K562 (cell line): ENCODE measurements at regions of chr15 and their contacts with region 1.

Region 1: GRCh38 chr15:89177633-89178306 is 43.6 kb downstream of the RLBP1 start:
- DNase-seq: peak; percentile 52 to 75 (median 57)
- ATAC-seq: peak; percentile 89
- H3K4me3 ChIP-seq: no peak overlapping the region
- H3K27ac ChIP-seq: no peak overlapping the region
- H3K4me1 ChIP-seq: no peaks in the 10 kb centered on the region
- H3K27me3 ChIP-seq: no peaks in the 10 kb centered on the region
- CTCF ChIP-seq: peak; percentile 80 to 83 (median 81)
- EP300 ChIP-seq: no peak
- POLR2A ChIP-seq: no peak
- RAD21 ChIP-seq: peak; percentile 74 to 83

Region 2: GRCh38 chr15:88882785-88883184 is 295.0 kb before region 1 on chr15:
- CTCF ChIA-PET with region 1: interaction called, 4 read pairs
- POLR2A ChIA-PET with region 1: no interaction called
- in situ Hi-C with region 1: loop called (anchors 10 kb)
- intact Hi-C with region 1: no loop called
- DNase-seq: no peak
- ATAC-seq: no peak
- H3K4me3 ChIP-seq: no peak overlapping the region
- H3K27ac ChIP-seq: no peak overlapping the region
- H3K4me1 ChIP-seq: peaks cover 0 to 17% of the 10 kb centered on the region in 2 experiments; a peak in 1 of 5 replicates
- H3K27me3 ChIP-seq: peaks cover 0 to 13% of the 10 kb centered on the region in 2 experiments; a peak in 2 of 5 replicates
- CTCF ChIP-seq: no peak
- EP300 ChIP-seq: no peak
- POLR2A ChIP-seq: no peak
- RAD21 ChIP-seq: no peak

Region 3: DNA sequence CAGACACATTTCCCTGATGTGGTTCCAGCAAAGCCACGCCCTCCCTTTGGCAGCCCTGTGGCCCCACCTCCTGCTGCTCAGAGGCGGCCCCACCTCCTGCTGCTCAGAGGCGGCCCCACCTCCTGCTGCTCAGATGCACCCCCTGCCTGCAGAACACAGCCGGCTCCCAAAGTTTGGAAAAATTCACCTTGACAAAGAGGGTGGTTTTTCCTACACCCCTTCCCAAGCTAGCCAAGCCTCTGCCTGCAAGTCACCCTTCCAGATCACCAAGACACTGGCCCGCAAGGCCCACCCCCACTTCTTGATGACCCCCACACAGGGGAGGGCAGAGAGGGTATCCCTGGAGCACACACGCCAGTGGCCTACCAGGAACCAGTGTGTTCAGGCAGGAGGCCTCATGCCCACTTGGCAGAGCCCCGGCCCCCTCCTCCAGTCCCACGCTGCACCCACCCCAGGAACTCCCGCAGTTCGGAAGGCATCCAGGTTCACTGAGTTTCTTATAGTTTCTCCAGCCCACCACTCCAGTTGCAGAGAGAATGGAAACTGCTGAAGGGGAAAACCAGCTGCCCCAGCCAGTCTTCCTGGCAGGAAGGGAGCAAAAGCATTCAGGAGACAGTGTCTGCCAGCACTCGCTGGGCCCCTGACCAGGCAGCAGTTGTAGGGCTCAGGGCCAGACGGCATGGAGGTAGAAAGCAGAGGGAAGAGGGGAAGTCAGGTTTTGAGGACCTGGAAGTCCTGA is 280.1 kb before region 1 on chr15:
- CTCF ChIA-PET with region 1: interaction called, 11 read pairs
- POLR2A ChIA-PET with region 1: no interaction called
- in situ Hi-C with region 1: no loop called
- intact Hi-C with region 1: loop called (anchors 5 kb)
- DNase-seq: peak; percentile 83 to 91 (median 84)
- ATAC-seq: peak; percentile 98
- H3K4me3 ChIP-seq: no peak overlapping the region
- H3K27ac ChIP-seq: no peak overlapping the region
- H3K4me1 ChIP-seq: peaks cover 9 to 43% of the 10 kb centered on the region in 2 experiments; a peak in 4 of 5 replicates
- H3K27me3 ChIP-seq: no peaks in the 10 kb centered on the region
- CTCF ChIP-seq: peak; percentile 67 to 74 (median 73)
- EP300 ChIP-seq: no peak
- POLR2A ChIP-seq: no peak
- RAD21 ChIP-seq: peak; percentile 38 to 52; a peak in 3 of 4 replicates

Region 4: GRCh38 chr15:89034288-89034687 is 143.5 kb before region 1 on chr15:
- CTCF ChIA-PET with region 1: interaction called, 3 read pairs
- POLR2A ChIA-PET with region 1: no interaction called
- in situ Hi-C with region 1: no loop called
- intact Hi-C with region 1: loop called (anchors 5 kb)
- DNase-seq: peak in 1 of 4 experiments; percentile 47
- ATAC-seq: peak; percentile 77
- H3K4me3 ChIP-seq: no peak overlapping the region
- H3K27ac ChIP-seq: no peak overlapping the region
- H3K4me1 ChIP-seq: peaks cover 0 to 8% of the 10 kb centered on the region in 2 experiments; a peak in 1 of 5 replicates
- H3K27me3 ChIP-seq: peaks cover 6 to 10% of the 10 kb centered on the region in 2 experiments; a peak in 2 of 5 replicates
- CTCF ChIP-seq: peak; percentile 45 to 66 (median 46); a peak in 5 of 6 replicates
- EP300 ChIP-seq: no peak
- POLR2A ChIP-seq: no peak
- RAD21 ChIP-seq: peak; percentile 44 to 72

Region 5: DNA sequence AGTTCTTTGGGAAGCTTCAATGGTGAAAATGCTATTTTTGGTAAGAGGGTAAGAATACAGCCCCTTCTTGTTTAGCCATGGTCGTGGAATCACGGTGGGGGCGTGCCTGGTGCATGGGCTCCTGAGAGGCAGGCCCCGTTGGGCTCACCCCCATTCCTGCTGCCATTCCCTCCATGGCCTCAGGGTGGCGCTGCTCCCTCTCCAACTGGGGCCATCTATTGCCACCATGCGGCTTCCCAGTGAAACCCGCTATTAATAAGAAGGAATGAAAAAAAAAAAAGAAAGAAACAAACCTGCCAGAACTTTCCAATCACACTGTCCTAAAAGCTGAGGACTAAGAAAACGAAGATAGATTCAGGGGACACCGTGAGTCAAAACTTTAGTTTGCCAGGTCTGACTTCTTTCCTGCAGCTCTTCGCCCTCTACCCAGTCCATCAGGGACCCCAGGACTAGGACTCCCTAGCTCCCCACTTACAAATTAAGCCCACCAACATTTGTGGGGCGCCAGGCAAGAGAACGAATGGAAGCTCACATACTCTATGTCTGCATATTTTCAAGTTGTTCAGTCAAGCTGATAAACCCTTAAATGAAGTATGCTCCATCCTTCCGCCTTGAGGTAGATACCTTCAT is 120.2 kb before region 1 on chr15:
- CTCF ChIA-PET with region 1: interaction called, 39 read pairs
- POLR2A ChIA-PET with region 1: no interaction called
- in situ Hi-C with region 1: loop called (anchors 5 kb)
- intact Hi-C with region 1: loop called (anchors 1 kb)
- DNase-seq: peak; percentile 89 to 93 (median 91)
- ATAC-seq: peak; percentile 96
- H3K4me3 ChIP-seq: no peak overlapping the region
- H3K27ac ChIP-seq: no peak overlapping the region
- H3K4me1 ChIP-seq: peaks cover 8 to 14% of the 10 kb centered on the region in 2 experiments; a peak in 3 of 5 replicates
- H3K27me3 ChIP-seq: no peaks in the 10 kb centered on the region
- CTCF ChIP-seq: peak; percentile 99 to 100 (median 100)
- EP300 ChIP-seq: no peak
- POLR2A ChIP-seq: no peak
- RAD21 ChIP-seq: peak; percentile 97 to 98